ENCODE measurements at regions of chrX and their contacts with region 1.

Region 1: DNA sequence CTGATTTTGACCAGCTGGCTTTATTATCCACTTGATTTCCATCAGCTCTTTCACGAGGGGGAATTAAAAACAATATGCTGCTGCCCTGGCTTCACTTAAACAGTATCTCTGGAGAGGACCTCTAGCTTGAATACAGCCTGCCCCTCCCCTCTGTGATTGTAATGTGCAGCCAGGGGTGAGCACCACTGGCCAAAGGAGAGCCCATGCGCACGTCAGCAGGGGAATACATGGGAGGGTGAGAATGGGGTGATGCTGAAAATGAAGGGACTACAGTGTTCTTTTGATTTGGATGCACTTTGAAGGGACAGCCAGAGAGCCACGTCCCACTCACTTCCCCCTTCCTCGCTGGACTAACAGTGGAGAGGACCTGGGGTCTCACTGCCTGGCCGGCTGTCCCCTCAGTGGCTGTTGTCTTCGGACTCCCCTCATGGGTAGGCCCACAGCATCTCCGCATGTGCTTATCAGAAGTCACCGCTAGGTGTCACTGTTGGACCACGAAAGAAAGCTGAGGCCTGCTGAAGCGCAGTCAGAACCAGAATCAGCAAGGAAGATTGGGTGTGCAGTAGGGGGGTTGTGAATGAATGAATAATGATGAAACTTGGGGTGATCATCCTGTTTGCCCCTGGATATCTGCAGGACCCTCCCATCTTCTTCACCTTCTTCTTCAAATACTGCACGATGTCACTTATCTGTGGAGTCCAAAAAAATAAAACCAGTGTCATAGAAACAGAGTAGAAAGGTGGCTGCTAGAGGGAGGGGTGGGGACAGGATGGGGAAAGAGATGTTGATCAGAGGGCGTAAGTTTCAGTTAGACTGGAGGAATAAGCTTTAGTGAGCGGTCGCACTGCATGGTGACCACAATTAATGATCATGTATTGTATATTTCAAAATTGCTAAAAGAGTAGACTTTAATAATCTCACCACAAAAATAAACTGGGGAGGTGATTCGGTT is 32.8 kb downstream of the CLCN4 start:
- DNase-seq: peak; percentile 83 to 91
- H3K4me3 ChIP-seq: no peak overlapping the region
- H3K27ac ChIP-seq: no peak overlapping the region
- H3K4me1 ChIP-seq: peaks cover 0 to 13% (median 0%) of the 10 kb centered on the region in 4 donors
- H3K27me3 ChIP-seq: peaks cover 0 to 5% (median 0%) of the 10 kb centered on the region in 3 donors
- CTCF ChIP-seq: peak in 5 of 7 experiments; percentile 57 to 92 (median 69)
- EP300 ChIP-seq: no peak
- POLR2A ChIP-seq: no peak

Region 2: DNA sequence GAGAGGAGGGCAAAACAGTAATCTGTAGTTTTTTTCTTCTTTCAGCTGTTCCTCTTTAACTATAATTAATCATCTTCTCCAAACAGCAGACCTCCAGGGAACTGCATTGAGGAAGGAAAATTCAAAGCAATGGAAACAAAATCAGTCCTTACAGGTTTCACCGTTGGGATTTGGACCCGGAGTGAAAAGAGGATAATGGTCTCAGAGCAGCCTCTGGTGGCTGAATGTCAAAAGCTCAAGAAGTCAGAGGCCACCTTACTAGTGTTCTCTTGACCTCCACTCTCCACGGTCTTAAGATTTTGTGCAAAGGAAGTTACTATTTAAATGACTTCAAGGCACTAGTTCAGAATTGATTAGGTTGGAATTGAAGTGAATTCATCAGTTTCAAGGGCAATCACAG is 446.7 kb after region 1 on chrX:
- intact Hi-C with region 1: loop called (anchors 10 kb)
- DNase-seq: peak in 1 of 2 donors; percentile 73
- H3K4me3 ChIP-seq: no peak overlapping the region
- H3K27ac ChIP-seq: peak overlapping the region in 1 of 5 donors; percentile 20
- H3K4me1 ChIP-seq: no peaks in the 10 kb centered on the region
- H3K27me3 ChIP-seq: no peaks in the 10 kb centered on the region
- CTCF ChIP-seq: peak in 4 of 7 experiments; percentile 25 to 40 (median 32)
- EP300 ChIP-seq: no peak
- POLR2A ChIP-seq: no peak

Region 3: DNA sequence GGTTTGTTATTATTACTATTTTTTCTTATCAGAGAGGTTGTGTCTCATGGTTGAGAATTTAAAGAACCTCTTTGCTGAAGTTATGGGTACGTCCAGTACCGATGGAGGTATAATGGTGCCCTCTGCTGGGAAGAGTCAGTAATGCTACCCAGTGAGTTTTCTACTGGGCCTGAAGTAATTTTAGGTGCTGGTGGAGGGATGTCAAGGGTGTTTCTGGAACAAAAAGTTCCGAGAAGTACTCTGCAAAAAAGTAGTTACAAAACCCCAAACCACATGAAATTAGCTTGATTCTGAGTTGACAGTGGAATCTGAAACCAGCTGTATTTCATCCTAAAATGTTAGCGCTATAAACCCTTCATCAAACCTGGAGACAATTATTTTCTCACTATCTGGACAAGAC is 533.3 kb after region 1 on chrX:
- intact Hi-C with region 1: loop called (anchors 10 kb)
- DNase-seq: peak; percentile 59 to 77
- H3K4me3 ChIP-seq: no peak overlapping the region
- H3K27ac ChIP-seq: no peak overlapping the region
- H3K4me1 ChIP-seq: no peaks in the 10 kb centered on the region
- H3K27me3 ChIP-seq: no peaks in the 10 kb centered on the region
- CTCF ChIP-seq: peak in 5 of 7 experiments; percentile 3 to 75 (median 69)
- EP300 ChIP-seq: no peak
- POLR2A ChIP-seq: no peak

Region 4: GRCh38 chrX:11137543-11138139 is 948.0 kb after region 1 on chrX:
- intact Hi-C with region 1: loop called (anchors 10 kb)
- DNase-seq: peak in 1 of 2 donors; percentile 66
- H3K4me3 ChIP-seq: no peak overlapping the region
- H3K27ac ChIP-seq: no peak overlapping the region
- H3K4me1 ChIP-seq: peaks cover 0 to 5% (median 0%) of the 10 kb centered on the region in 4 donors
- H3K27me3 ChIP-seq: peaks cover 0 to 8% (median 0%) of the 10 kb centered on the region in 3 donors
- CTCF ChIP-seq: peak in 4 of 7 experiments; percentile 47 to 72 (median 53)
- EP300 ChIP-seq: no peak
- POLR2A ChIP-seq: no peak